Endothelial cell of umbilical vein (primary cell): ENCODE measurements at regions of chr7 and their contacts with region 1.

Region 1: DNA sequence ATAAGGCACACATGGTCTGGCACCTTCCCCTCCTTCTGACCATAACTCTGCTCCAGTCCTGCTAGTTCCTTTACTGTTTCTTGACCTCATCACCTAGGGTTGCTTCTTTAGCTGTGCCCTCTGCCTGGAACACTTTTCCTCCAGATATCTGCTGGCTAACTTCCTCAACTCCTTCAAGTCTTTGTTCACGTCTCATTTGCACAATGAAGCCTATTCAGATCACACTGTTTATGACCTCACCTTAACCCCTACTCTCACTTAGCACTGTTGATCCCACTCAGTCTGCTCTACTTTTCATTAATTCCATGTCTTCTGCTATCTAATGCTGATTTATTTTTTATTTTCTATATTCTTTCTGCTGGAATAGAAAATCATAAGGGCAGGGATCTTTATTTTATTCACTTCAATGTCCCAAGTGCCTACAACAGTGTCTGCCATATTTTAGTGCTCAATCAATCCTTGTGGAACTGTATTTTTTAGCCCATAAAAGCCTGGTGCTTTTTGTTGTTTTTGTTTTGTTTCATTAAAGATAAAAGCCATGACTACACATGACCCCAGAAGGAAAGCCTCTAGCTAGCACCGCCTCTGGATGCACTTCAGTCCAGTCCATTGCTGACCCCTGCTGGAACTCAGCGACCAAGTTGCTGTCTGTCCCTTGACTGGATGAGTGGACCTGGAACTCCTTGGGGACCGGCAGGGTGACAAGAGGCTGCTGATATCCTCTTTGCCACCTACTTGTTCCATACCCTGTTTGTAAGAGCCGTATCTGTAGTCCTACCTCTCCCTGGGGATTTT is 12.3 kb downstream of the KLF14 start:
- DNase-seq: peak; percentile 71
- H3K4me3 ChIP-seq: no peak overlapping the region
- H3K27ac ChIP-seq: no peak overlapping the region
- H3K4me1 ChIP-seq: no peaks in the 10 kb centered on the region
- H3K27me3 ChIP-seq: peaks cover 21 to 28% of the 10 kb centered on the region in 2 experiments
- CTCF ChIP-seq: peak; percentile 55 to 67
- POLR2A ChIP-seq: no peak

Region 2: DNA sequence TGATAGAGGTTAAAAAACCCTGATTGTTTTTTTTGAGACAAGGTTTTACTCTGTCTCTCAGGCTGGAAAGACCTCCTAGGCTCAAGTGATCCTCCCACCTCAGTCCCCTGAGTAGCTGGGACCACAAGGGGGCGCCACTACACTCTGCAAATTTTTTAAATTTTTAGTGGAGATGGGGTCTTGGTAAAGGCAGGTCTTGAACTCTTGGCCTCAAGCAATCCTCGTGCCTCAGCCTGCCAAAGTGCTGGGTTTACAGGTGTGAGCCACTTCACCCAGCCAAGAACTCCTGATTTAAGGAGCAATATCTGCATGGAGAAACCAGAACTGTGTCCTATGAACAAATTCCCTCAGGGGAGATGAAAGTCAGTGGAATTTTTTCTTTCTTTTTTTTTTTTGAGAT is 658.6 kb before region 1 on chr7:
- CTCF ChIA-PET with region 1: interaction called, 9 read pairs
- POLR2A ChIA-PET with region 1: no interaction called
- dilution Hi-C with region 1: no loop called
- intact Hi-C with region 1: loop called (anchors 2 kb)
- DNase-seq: peak; percentile 48
- H3K4me3 ChIP-seq: no peak overlapping the region
- H3K27ac ChIP-seq: no peak overlapping the region
- H3K4me1 ChIP-seq: peaks cover 8% of the 10 kb centered on the region
- H3K27me3 ChIP-seq: no peaks in the 10 kb centered on the region
- CTCF ChIP-seq: peak; percentile 78 to 86
- POLR2A ChIP-seq: no peak

Region 3: GRCh38 chr7:130277763-130278643 is 443.7 kb before region 1 on chr7:
- CTCF ChIA-PET with region 1: no interaction called
- POLR2A ChIA-PET with region 1: no interaction called
- dilution Hi-C with region 1: no loop called
- intact Hi-C with region 1: loop called (anchors 1 kb)
- DNase-seq: peak; percentile 58
- H3K4me3 ChIP-seq: no peak overlapping the region
- H3K27ac ChIP-seq: no peak overlapping the region
- H3K4me1 ChIP-seq: no peaks in the 10 kb centered on the region
- H3K27me3 ChIP-seq: peaks cover 5 to 18% of the 10 kb centered on the region in 2 experiments
- CTCF ChIP-seq: peak; percentile 36 to 57
- POLR2A ChIP-seq: no peak

Region 4: DNA sequence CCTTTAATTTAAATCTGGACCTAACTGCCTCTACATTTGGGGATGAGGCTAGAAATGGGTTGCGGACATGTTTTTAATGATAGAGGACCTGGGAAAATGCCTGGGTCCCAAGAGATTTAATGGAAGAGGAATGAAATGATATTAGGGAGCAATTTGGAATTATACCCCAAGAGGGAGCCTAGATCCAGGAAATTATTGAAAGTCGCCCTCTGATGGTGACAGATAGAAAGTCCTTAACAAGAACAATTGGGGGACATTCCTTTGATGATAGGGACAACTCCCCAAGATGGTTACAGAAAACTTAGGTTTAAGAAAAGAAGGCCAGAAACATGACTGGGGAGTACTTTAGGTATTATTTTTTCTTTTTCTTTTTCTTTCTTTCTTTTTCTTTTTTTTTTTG is 25.8 kb before region 1 on chr7:
- CTCF ChIA-PET with region 1: no interaction called
- POLR2A ChIA-PET with region 1: no interaction called
- dilution Hi-C with region 1: no loop called
- intact Hi-C with region 1: no loop called
- DNase-seq: peak; percentile 41
- H3K4me3 ChIP-seq: no peak overlapping the region
- H3K27ac ChIP-seq: no peak overlapping the region
- H3K4me1 ChIP-seq: no peaks in the 10 kb centered on the region
- H3K27me3 ChIP-seq: peaks cover 0 to 7% of the 10 kb centered on the region in 2 experiments
- CTCF ChIP-seq: peak; percentile 36 to 52
- POLR2A ChIP-seq: no peak

Region 5: GRCh38 chr7:131836733-131837132 is 1115.0 kb after region 1 on chr7:
- CTCF ChIA-PET with region 1: no interaction called
- POLR2A ChIA-PET with region 1: no interaction called
- dilution Hi-C with region 1: no loop called
- intact Hi-C with region 1: no loop called
- DNase-seq: no peak
- H3K4me3 ChIP-seq: no peak overlapping the region
- H3K27ac ChIP-seq: no peak overlapping the region
- H3K4me1 ChIP-seq: no peaks in the 10 kb centered on the region
- H3K27me3 ChIP-seq: peaks cover 10 to 12% of the 10 kb centered on the region in 2 experiments
- CTCF ChIP-seq: no peak
- POLR2A ChIP-seq: no peak